CD4-positive, alpha-beta memory T cell (primary cell): ENCODE measurements at regions of chr2 and their contacts with region 1.

Region 1: GRCh38 chr2:264660-265468 is at the start of gene ACP1:
- DNase-seq: peak; percentile 94 to 97 (median 96)
- H3K4me3 ChIP-seq: peak within 1 kb of the TSS; percentile 18 to 75
- H3K4me3 Mint-ChIP-seq: peak within 1 kb of the TSS; percentile 92 to 96 (median 94)
- H3K27ac ChIP-seq: peak within 1 kb of the TSS; percentile 85
- H3K27ac Mint-ChIP-seq: peak within 1 kb of the TSS; percentile 96 to 97 (median 96)
- H3K4me1 ChIP-seq: peaks cover 44% of the 10 kb centered on the region
- H3K4me1 Mint-ChIP-seq: peaks cover 21 to 70% (median 45%) of the 10 kb centered on the region in 4 donors
- H3K27me3 ChIP-seq: no peaks in the 10 kb centered on the region
- H3K27me3 Mint-ChIP-seq: no peaks in the 10 kb centered on the region
- total RNA-seq, gene ACP1: 90.1 to 91.6 TPM

Region 2: GRCh38 chr2:246489-247144 is 18.2 kb before region 1 on chr2:
- CTCF ChIA-PET with region 1: interaction called, 6 read pairs
- POLR2A ChIA-PET with region 1: no interaction called
- intact Hi-C with region 1: loop called (anchors 2 kb)
- DNase-seq: peak; percentile 33 to 54 (median 45)
- H3K4me3 ChIP-seq: no peak overlapping the region
- H3K4me3 Mint-ChIP-seq: no peak overlapping the region
- H3K27ac ChIP-seq: no peak overlapping the region
- H3K27ac Mint-ChIP-seq: peak overlapping the region in 2 of 7 donors; percentile 13 to 56
- H3K4me1 ChIP-seq: no peaks in the 10 kb centered on the region
- H3K4me1 Mint-ChIP-seq: peaks cover 0 to 5% (median 4%) of the 10 kb centered on the region in 4 donors
- H3K27me3 ChIP-seq: no peaks in the 10 kb centered on the region
- H3K27me3 Mint-ChIP-seq: no peaks in the 10 kb centered on the region

Region 3: GRCh38 chr2:393711-394696 is 129.1 kb after region 1 on chr2:
- CTCF ChIA-PET with region 1: no interaction called
- POLR2A ChIA-PET with region 1: no interaction called
- intact Hi-C with region 1: loop called (anchors 1 kb)
- DNase-seq: peak; percentile 73 to 83 (median 76)
- H3K4me3 ChIP-seq: peak overlapping the region; percentile 38 to 41
- H3K4me3 Mint-ChIP-seq: peak overlapping the region; percentile 85 to 91 (median 88)
- H3K27ac ChIP-seq: peak overlapping the region; percentile 51
- H3K27ac Mint-ChIP-seq: peak overlapping the region; percentile 84 to 98 (median 97)
- H3K4me1 ChIP-seq: peaks cover 10% of the 10 kb centered on the region
- H3K4me1 Mint-ChIP-seq: peaks cover 12 to 26% (median 12%) of the 10 kb centered on the region in 4 donors
- H3K27me3 ChIP-seq: no peaks in the 10 kb centered on the region
- H3K27me3 Mint-ChIP-seq: no peaks in the 10 kb centered on the region

Region 4: DNA sequence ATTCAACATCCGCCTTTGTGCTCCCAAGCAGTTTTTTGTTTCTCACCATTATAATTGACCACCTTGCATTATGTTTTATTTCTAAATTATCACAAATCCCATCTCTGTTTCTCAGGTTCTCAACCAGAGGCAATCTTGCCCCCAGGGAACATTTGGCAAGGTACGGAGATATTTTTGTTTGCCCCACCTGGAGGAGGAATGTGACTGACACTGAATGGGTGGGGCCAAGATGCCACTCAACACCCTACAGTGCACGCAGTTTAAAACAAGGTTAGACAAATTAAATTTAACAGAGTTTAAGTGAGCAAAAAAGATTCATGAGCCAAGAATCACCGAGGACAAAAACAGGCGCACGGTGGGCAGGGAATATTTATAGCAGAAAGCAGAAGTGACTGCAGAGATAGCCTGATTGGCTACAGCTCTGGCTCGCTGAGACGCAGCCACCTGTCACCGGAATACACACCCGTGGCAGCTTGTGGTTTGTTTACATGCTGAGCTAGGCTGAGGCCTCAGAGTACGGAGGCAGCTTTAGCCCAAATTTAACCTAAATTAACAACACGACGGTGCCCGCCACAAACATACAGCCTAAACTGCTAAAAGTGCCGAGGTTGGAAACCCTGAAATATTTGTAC is 173.0 kb after region 1 on chr2:
- CTCF ChIA-PET with region 1: no interaction called
- POLR2A ChIA-PET with region 1: interaction called, 4 read pairs
- intact Hi-C with region 1: loop called (anchors 2 kb)
- DNase-seq: peak; percentile 83 to 87 (median 86)
- H3K4me3 ChIP-seq: peak overlapping the region; percentile 30 to 33
- H3K4me3 Mint-ChIP-seq: peak overlapping the region; percentile 81 to 94 (median 86)
- H3K27ac ChIP-seq: peak overlapping the region; percentile 62
- H3K27ac Mint-ChIP-seq: peak overlapping the region; percentile 88 to 100 (median 98)
- H3K4me1 ChIP-seq: peaks cover 24% of the 10 kb centered on the region
- H3K4me1 Mint-ChIP-seq: peaks cover 15 to 32% (median 25%) of the 10 kb centered on the region in 4 donors
- H3K27me3 ChIP-seq: no peaks in the 10 kb centered on the region
- H3K27me3 Mint-ChIP-seq: no peaks in the 10 kb centered on the region

Region 5: DNA sequence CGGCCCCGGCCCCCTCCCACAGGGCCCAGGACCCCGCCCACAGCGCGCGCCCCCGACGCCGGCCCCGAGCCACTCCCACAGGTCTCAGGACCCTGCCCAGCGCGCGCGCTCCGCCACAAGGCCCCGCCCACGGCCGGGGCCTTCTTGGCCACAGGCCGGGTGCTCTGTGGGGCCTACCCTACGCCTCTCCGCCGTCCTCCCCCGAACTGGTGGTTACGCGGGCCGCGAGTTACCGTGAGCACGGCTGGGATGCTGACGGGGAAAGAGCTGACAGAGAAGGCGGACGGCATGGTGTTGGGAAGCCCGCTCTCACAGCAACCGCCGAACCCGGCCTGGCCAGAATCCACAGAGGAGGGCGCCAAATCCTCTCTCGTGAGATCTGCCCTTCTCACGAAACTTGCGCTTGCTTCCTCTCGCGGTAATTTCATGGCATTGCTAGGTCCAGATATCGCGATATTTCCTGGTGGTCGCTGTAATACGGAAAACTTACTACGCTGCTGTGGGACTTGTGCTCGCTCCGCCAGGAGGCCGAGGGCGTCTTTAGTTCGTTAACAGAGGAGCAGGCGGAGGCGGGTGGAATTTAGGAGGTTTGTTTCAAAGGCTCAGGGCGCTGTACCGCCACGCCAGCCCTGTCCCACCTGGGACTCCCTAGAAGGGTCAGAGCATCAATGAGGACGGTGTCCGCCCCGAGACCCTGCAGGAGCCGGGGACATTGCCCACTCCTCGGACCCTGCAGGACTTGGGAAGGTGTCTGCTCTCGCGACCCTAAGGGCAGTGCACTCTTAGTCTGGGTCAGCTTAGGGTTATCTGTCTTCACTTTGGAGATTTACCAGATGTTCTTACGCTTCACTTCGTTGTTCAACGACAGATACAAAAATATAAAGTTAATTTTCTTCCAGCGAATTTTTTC is 412.4 kb after region 1 on chr2 and contains the start of gene TMEM18:
- CTCF ChIA-PET with region 1: no interaction called
- POLR2A ChIA-PET with region 1: no interaction called
- intact Hi-C with region 1: loop called (anchors 1 kb)
- DNase-seq: peak; percentile 97 to 100 (median 99)
- H3K4me3 ChIP-seq: peak within 1 kb of the TSS; percentile 100
- H3K4me3 Mint-ChIP-seq: peak within 1 kb of the TSS; percentile 93 to 98 (median 97)
- H3K27ac ChIP-seq: peak within 1 kb of the TSS; percentile 97
- H3K27ac Mint-ChIP-seq: peak within 1 kb of the TSS; percentile 97 to 99 (median 99)
- H3K4me1 ChIP-seq: peaks cover 25% of the 10 kb centered on the region
- H3K4me1 Mint-ChIP-seq: peaks cover 29 to 45% (median 35%) of the 10 kb centered on the region in 4 donors
- H3K27me3 ChIP-seq: no peaks in the 10 kb centered on the region
- H3K27me3 Mint-ChIP-seq: no peaks in the 10 kb centered on the region
- total RNA-seq, gene TMEM18: 26.2 to 28.1 TPM